CD8-positive, alpha-beta T cell (primary cell): ENCODE measurements at regions of chr12 and their contacts with region 1.

Region 1: GRCh38 chr12:31682136-31682962 is 22.9 kb downstream of the ETFBKMT start:
- DNase-seq: peak; percentile 46 to 89 (median 66)
- ATAC-seq: peak; percentile 98
- H3K4me3 ChIP-seq: no peak overlapping the region
- H3K4me3 Mint-ChIP-seq: peak overlapping the region; percentile 13
- H3K27ac ChIP-seq: peak overlapping the region in 1 of 2 experiments; percentile 31
- H3K27ac Mint-ChIP-seq: peak overlapping the region; percentile 75
- H3K4me1 ChIP-seq: no peaks in the 10 kb centered on the region
- H3K4me1 Mint-ChIP-seq: peaks cover 9% of the 10 kb centered on the region
- H3K27me3 ChIP-seq: no peaks in the 10 kb centered on the region
- H3K27me3 Mint-ChIP-seq: no peaks in the 10 kb centered on the region
- CTCF ChIP-seq: peak; percentile 82

Region 2: DNA sequence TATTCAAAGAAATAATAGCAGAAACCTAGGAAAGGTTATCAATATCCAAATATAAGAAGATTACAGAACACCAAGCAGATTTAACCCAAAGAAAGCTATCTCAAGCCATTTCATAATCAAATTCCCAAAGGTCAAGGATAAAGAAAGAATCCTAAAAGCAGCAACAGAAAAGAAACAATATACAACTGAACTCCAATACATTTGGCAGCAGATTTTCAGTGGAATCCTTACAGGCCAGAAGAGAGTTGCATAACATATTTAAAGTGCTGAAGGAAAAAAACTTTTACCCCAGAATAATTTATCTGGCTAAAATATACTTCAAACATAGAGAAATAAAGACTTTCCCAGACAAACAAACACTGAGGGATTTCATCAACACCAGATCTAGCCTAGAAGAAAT is 145.7 kb before region 1 on chr12:
- CTCF ChIA-PET with region 1: no interaction called
- POLR2A ChIA-PET with region 1: no interaction called
- intact Hi-C with region 1: no loop called
- DNase-seq: no peak
- ATAC-seq: no peak
- H3K4me3 ChIP-seq: no peak overlapping the region
- H3K4me3 Mint-ChIP-seq: no peak overlapping the region
- H3K27ac ChIP-seq: no peak overlapping the region
- H3K27ac Mint-ChIP-seq: no peak overlapping the region
- H3K4me1 ChIP-seq: no peaks in the 10 kb centered on the region
- H3K4me1 Mint-ChIP-seq: no peaks in the 10 kb centered on the region
- H3K27me3 ChIP-seq: no peaks in the 10 kb centered on the region
- H3K27me3 Mint-ChIP-seq: peaks cover 15% of the 10 kb centered on the region
- CTCF ChIP-seq: no peak

Region 3: GRCh38 chr12:31659087-31659933 is 23.0 kb before region 1 on chr12 and contains the start of gene ETFBKMT:
- CTCF ChIA-PET with region 1: interaction called, 13 read pairs
- POLR2A ChIA-PET with region 1: interaction called, 3 read pairs
- intact Hi-C with region 1: loop called (anchors 1 to 2 kb)
- DNase-seq: peak; percentile 84 to 97 (median 92)
- ATAC-seq: peak; percentile 99
- H3K4me3 ChIP-seq: peak within 1 kb of the TSS; percentile 82 to 87
- H3K4me3 Mint-ChIP-seq: peak within 1 kb of the TSS; percentile 98
- H3K27ac ChIP-seq: peak within 1 kb of the TSS; percentile 89 to 92
- H3K27ac Mint-ChIP-seq: peak within 1 kb of the TSS; percentile 100
- H3K4me1 ChIP-seq: peaks cover 11% of the 10 kb centered on the region
- H3K4me1 Mint-ChIP-seq: peaks cover 14% of the 10 kb centered on the region
- H3K27me3 ChIP-seq: no peaks in the 10 kb centered on the region
- H3K27me3 Mint-ChIP-seq: no peaks in the 10 kb centered on the region
- CTCF ChIP-seq: peak; percentile 22
- total RNA-seq, gene ETFBKMT: 0.41 to 1.0 TPM

Region 4: GRCh38 chr12:31966558-31967205 is 284.3 kb after region 1 on chr12:
- CTCF ChIA-PET with region 1: interaction called, 4 read pairs
- POLR2A ChIA-PET with region 1: no interaction called
- intact Hi-C with region 1: loop called in 1 of 2 experiments (anchors 5 kb)
- DNase-seq: peak in 2 of 9 experiments; percentile 33 to 45
- ATAC-seq: no peak
- H3K4me3 ChIP-seq: peak overlapping the region; percentile 16 to 40
- H3K4me3 Mint-ChIP-seq: peak overlapping the region; percentile 84
- H3K27ac ChIP-seq: peak overlapping the region; percentile 22 to 73
- H3K27ac Mint-ChIP-seq: peak overlapping the region; percentile 95
- H3K4me1 ChIP-seq: peaks cover 92% of the 10 kb centered on the region
- H3K4me1 Mint-ChIP-seq: peaks cover 91% of the 10 kb centered on the region
- H3K27me3 ChIP-seq: no peaks in the 10 kb centered on the region
- H3K27me3 Mint-ChIP-seq: no peaks in the 10 kb centered on the region
- CTCF ChIP-seq: no peak

Region 5: GRCh38 chr12:32106517-32107358 is 424.4 kb after region 1 on chr12 and contains the start of gene BICD1:
- CTCF ChIA-PET with region 1: no interaction called
- POLR2A ChIA-PET with region 1: no interaction called
- intact Hi-C with region 1: loop called in 1 of 2 experiments (anchors 5 kb)
- DNase-seq: peak; percentile 32 to 85 (median 74)
- ATAC-seq: peak; percentile 85
- H3K4me3 ChIP-seq: peak within 1 kb of the TSS; percentile 55 to 84
- H3K4me3 Mint-ChIP-seq: peak within 1 kb of the TSS; percentile 88
- H3K27ac ChIP-seq: peak within 1 kb of the TSS; percentile 16 to 61
- H3K27ac Mint-ChIP-seq: peak within 1 kb of the TSS; percentile 88
- H3K4me1 ChIP-seq: peaks cover 17% of the 10 kb centered on the region
- H3K4me1 Mint-ChIP-seq: peaks cover 30% of the 10 kb centered on the region
- H3K27me3 ChIP-seq: no peaks in the 10 kb centered on the region
- H3K27me3 Mint-ChIP-seq: no peaks in the 10 kb centered on the region
- CTCF ChIP-seq: peak; percentile 17
- total RNA-seq, gene BICD1: 7.0 to 7.2 TPM

Region 6: GRCh38 chr12:32312049-32312670 is 629.8 kb after region 1 on chr12:
- CTCF ChIA-PET with region 1: interaction called, 9 read pairs
- POLR2A ChIA-PET with region 1: no interaction called
- intact Hi-C with region 1: loop called in 1 of 2 experiments (anchors 2 kb)
- DNase-seq: peak in 2 of 9 experiments; percentile 58 to 72
- ATAC-seq: peak; percentile 44
- H3K4me3 ChIP-seq: no peak overlapping the region
- H3K4me3 Mint-ChIP-seq: no peak overlapping the region
- H3K27ac ChIP-seq: no peak overlapping the region
- H3K27ac Mint-ChIP-seq: no peak overlapping the region
- H3K4me1 ChIP-seq: no peaks in the 10 kb centered on the region
- H3K4me1 Mint-ChIP-seq: peaks cover 3% of the 10 kb centered on the region
- H3K27me3 ChIP-seq: no peaks in the 10 kb centered on the region
- H3K27me3 Mint-ChIP-seq: no peaks in the 10 kb centered on the region
- CTCF ChIP-seq: peak; percentile 35

Region 7: GRCh38 chr12:32522331-32523221 is 840.2 kb after region 1 on chr12:
- CTCF ChIA-PET with region 1: no interaction called
- POLR2A ChIA-PET with region 1: no interaction called
- intact Hi-C with region 1: no loop called
- DNase-seq: peak in 1 of 9 experiments; percentile 8
- ATAC-seq: no peak
- H3K4me3 ChIP-seq: no peak overlapping the region
- H3K4me3 Mint-ChIP-seq: no peak overlapping the region
- H3K27ac ChIP-seq: no peak overlapping the region
- H3K27ac Mint-ChIP-seq: no peak overlapping the region
- H3K4me1 ChIP-seq: no peaks in the 10 kb centered on the region
- H3K4me1 Mint-ChIP-seq: peaks cover 7% of the 10 kb centered on the region
- H3K27me3 ChIP-seq: peaks cover 0 to 2% of the 10 kb centered on the region in 2 experiments
- H3K27me3 Mint-ChIP-seq: peaks cover 3% of the 10 kb centered on the region
- CTCF ChIP-seq: no peak